Endothelial cell of umbilical vein (primary cell): ENCODE measurements at regions of chr18 and their contacts with region 1.

Region 1: DNA sequence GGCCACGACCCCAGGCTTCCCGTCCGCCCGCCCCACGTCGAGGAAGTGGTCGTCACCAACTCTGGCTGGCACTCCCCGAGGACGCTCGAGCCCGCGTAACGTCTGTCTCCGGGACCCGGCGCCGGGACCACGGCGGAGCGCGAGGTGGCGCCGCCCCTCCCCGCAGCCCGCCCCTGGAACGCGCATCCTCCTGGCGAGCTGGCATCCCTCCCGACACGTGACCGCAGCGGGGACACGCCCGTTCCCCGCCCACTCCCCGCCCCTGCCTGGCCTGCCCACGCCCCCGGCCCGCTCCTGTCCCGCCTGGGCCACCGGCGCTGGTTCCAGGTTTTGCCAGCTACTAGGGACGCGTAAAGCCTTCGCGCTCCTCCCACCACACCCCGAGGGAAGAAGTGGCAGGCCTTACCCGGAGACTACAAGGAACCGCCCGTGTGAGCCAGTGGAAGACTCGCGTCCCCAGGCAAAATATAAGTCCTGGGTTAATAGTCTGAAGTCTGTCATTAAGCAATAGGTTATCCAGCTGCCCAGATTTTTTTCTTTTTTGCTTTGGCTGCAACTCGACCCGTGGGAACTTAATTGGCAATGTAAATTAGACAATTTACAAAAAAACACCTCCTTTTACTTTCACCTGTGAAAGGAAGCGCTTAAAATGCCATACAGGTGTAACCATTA is at the start of gene OSBPL1A:
- DNase-seq: peak; percentile 95
- H3K4me3 ChIP-seq: peak within 1 kb of the TSS; percentile 4 to 86 (median 52)
- H3K27ac ChIP-seq: peak within 1 kb of the TSS; percentile 57
- H3K4me1 ChIP-seq: peaks cover 10% of the 10 kb centered on the region
- H3K27me3 ChIP-seq: no peaks in the 10 kb centered on the region
- CTCF ChIP-seq: no peak
- POLR2A ChIP-seq: peak; percentile 83
- total RNA-seq, gene OSBPL1A: 12.7 and 16.5 TPM in 2 replicates

Region 2: GRCh38 chr18:24271381-24272331 is 126.2 kb before region 1 on chr18:
- CTCF ChIA-PET with region 1: no interaction called
- POLR2A ChIA-PET with region 1: no interaction called
- dilution Hi-C with region 1: no loop called
- intact Hi-C with region 1: loop called (anchors 5 kb)
- DNase-seq: peak; percentile 78
- H3K4me3 ChIP-seq: peak overlapping the region; percentile 43 to 58 (median 49)
- H3K27ac ChIP-seq: no peak overlapping the region
- H3K4me1 ChIP-seq: peaks cover 6% of the 10 kb centered on the region
- H3K27me3 ChIP-seq: no peaks in the 10 kb centered on the region
- CTCF ChIP-seq: no peak
- POLR2A ChIP-seq: no peak

Region 3: GRCh38 chr18:24369426-24369825 is 28.4 kb before region 1 on chr18:
- CTCF ChIA-PET with region 1: interaction called, 10 read pairs
- POLR2A ChIA-PET with region 1: no interaction called
- dilution Hi-C with region 1: no loop called
- intact Hi-C with region 1: no loop called
- DNase-seq: no peak
- H3K4me3 ChIP-seq: no peak overlapping the region
- H3K27ac ChIP-seq: peak overlapping the region; percentile 19
- H3K4me1 ChIP-seq: peaks cover 11% of the 10 kb centered on the region
- H3K27me3 ChIP-seq: no peaks in the 10 kb centered on the region
- CTCF ChIP-seq: no peak
- POLR2A ChIP-seq: no peak

Region 4: GRCh38 chr18:24426398-24427294 is 28.8 kb after region 1 on chr18 and contains the start of gene IMPACT:
- CTCF ChIA-PET with region 1: interaction called, 5 read pairs
- POLR2A ChIA-PET with region 1: interaction called, 4 read pairs
- dilution Hi-C with region 1: no loop called
- intact Hi-C with region 1: loop called (anchors 1 kb)
- DNase-seq: peak; percentile 83
- H3K4me3 ChIP-seq: peak within 1 kb of the TSS; percentile 70 to 92 (median 88)
- H3K27ac ChIP-seq: peak within 1 kb of the TSS; percentile 53
- H3K4me1 ChIP-seq: peaks cover 12% of the 10 kb centered on the region
- H3K27me3 ChIP-seq: peaks cover 10 to 11% of the 10 kb centered on the region in 2 experiments
- CTCF ChIP-seq: no peak
- POLR2A ChIP-seq: peak; percentile 91
- total RNA-seq, gene IMPACT: 28.4 and 28.6 TPM in 2 replicates